ENCODE measurements at regions of chr4 and their contacts with region 1.

Region 1: GRCh38 chr4:55395529-55396307 is at the start of gene TMEM165:
- DNase-seq: peak; percentile 80 to 97 (median 94)

Region 2: GRCh38 chr4:55345980-55346850 is 49.5 kb before region 1 on chr4 and contains the start of gene SRD5A3:
- intact Hi-C with region 1: loop called (anchors 2 kb)
- DNase-seq: peak; percentile 60 to 95 (median 86)

Region 3: DNA sequence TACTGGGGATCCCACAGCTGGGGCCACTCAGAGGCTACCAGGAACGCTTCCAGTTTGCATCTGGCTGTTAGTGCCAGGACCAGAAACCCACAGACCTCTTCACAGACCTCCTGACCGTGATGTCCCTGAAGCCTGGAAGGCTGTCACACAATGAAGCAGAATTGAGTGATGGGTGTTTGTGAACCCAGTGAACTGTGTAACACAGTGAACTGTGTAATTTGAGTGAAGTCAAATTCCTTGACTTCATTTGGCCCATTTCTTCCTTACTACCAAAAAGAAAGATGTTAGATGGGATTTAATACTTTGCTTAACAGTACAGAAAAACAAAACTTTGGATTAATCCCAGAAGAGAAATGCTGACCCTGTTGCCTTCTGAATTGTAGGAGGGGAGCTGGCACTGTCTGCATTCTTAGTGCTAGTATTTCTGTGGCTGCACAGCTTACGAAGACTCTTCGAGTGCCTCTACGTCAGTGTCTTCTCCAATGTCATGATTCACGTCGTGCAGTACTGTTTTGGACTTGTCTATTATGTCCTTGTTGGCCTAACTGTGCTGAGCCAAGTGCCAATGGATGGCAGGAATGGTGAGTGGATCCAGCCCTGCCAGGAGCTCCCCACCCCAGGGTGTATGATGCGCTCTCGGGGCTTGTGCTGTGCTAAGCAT is 31.9 kb before region 1 on chr4:
- intact Hi-C with region 1: loop called (anchors 5 kb)
- DNase-seq: peak; percentile 37 to 90 (median 76)

Region 4: GRCh38 chr4:55458164-55458563 is 62.4 kb after region 1 on chr4:
- intact Hi-C with region 1: no loop called
- DNase-seq: no peak

Region 5: GRCh38 chr4:55546756-55547465 is 151.2 kb after region 1 on chr4 and contains the start of gene CLOCK:
- intact Hi-C with region 1: loop called (anchors 10 kb)
- DNase-seq: peak; percentile 65 to 95 (median 88)

Region 6: DNA sequence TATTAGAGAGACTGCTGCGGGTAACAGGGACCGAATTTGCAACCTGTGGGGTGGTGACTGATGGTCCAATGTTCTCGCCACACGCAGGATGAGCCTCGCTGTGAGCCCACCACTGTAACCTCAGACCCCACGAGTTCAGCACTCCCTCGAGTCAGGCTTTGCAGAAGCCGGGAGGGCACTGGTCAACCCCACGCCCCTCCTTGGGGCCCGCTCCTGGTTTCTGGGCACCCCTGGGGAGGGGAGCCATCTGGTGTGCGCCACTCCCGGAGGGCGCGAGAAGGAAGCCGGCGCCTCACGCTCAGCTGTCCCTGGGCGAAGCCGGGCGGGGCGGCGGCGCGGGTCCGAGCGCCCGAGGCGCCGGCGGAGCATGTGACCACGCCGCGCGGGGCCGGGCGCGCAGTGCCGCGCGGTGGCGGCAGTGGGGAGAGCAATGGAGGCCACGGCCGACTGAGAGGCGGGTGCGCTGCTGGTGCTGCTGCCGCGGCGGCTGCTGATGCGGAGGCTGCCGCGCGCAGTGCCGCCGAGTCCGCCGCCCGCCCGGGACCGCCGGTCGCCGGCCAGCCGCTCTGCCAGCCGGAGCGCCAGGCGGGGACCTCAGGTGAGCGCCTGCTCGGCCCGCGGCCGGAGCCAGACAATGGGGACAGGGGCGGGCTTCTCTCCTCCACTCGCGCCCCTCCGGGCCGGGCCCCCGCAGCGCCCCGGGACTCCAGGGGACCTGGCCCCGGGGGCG is 653.1 kb after region 1 on chr4:
- intact Hi-C with region 1: no loop called
- DNase-seq: peak in 41 of 42 donors; percentile 19 to 83 (median 68)

Measured in head of caudate nucleus (tissue), 42 donors.